PC-9 (cell line): ENCODE measurements at regions of chr21 and their contacts with region 1.

Region 1: DNA sequence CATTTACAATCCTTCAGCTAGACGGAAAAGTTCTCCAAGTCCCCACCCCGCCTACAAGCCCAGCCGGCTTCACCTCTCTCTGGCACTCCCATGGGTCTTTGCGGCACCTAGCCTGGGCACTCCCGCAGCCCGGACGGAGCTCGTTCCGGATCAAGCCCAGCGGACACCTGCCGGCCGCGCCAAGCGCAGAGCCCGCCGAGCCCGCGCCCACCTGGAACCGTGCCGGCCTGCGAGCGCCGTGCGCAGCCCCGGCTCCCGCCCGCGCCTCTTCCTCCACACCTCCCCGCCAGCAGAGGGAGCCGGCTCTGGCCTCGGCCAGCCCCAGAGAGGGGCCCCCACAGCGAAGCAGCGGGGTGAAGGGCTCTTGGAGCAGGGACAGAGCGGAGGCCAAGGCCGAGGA is 50.0 kb upstream of the KRTAP19-8 start:
- DNase-seq: no peak
- H3K4me3 ChIP-seq: no peak overlapping the region
- H3K27ac ChIP-seq: no peak overlapping the region
- H3K4me1 ChIP-seq: no peaks in the 10 kb centered on the region
- H3K27me3 ChIP-seq: peaks cover 7% of the 10 kb centered on the region; the same call in 1 of the 2 replicates
- CTCF ChIP-seq: no peak

Region 2: DNA sequence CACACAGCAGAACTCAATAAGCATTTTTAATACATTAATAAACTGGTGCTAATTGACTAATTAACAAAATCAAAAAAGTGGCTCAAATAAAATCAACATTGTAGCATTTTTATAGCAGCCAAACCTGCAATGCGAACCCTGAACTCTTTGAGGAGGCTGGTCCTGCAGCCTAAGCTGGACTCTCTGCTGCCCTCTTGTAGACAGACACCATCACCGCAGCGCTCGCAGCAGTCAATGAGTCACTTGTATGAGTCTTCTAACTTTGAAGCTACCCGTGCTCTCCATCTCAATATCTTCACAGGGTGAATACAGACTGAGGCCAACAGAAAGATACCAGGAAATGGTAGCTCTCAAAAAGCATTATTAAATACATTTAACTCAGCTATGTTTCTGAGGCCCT is 249.0 kb before region 1 on chr21:
- CTCF ChIA-PET with region 1: no interaction called
- POLR2A ChIA-PET with region 1: no interaction called
- intact Hi-C with region 1: loop called (anchors 5 kb)
- DNase-seq: peak in 1 of 2 experiments; percentile 38
- H3K4me3 ChIP-seq: no peak overlapping the region
- H3K27ac ChIP-seq: no peak overlapping the region
- H3K4me1 ChIP-seq: no peaks in the 10 kb centered on the region
- H3K27me3 ChIP-seq: peaks cover 6% of the 10 kb centered on the region; the same call in 1 of the 2 replicates
- CTCF ChIP-seq: peak; percentile 58

Region 3: DNA sequence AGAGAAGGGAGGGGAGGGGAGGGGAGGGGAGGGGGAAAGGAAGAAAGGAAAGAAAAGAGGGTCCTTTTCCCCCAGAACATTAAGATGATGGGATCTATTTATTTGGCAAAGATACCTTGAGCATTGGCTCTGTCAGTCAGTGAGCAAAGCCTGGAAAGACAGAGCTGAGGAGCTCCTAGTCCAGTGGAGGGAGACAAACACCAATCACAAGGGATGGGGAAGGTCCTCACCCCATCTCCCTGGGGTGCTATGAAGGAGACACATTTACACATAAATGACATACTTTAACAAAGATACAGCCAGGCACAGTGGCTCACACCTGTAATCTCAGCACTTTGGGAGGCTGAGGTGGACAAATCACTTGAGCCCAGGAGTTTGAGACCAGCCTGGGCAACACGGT is 410.7 kb after region 1 on chr21:
- CTCF ChIA-PET with region 1: no interaction called
- POLR2A ChIA-PET with region 1: no interaction called
- intact Hi-C with region 1: no loop called
- DNase-seq: no peak
- H3K4me3 ChIP-seq: no peak overlapping the region
- H3K27ac ChIP-seq: no peak overlapping the region
- H3K4me1 ChIP-seq: peaks cover 29% of the 10 kb centered on the region
- H3K27me3 ChIP-seq: no peaks in the 10 kb centered on the region
- CTCF ChIP-seq: no peak